GM13976 (cell line): ENCODE measurements at regions of chr19 and their contacts with region 1.

Region 1: DNA sequence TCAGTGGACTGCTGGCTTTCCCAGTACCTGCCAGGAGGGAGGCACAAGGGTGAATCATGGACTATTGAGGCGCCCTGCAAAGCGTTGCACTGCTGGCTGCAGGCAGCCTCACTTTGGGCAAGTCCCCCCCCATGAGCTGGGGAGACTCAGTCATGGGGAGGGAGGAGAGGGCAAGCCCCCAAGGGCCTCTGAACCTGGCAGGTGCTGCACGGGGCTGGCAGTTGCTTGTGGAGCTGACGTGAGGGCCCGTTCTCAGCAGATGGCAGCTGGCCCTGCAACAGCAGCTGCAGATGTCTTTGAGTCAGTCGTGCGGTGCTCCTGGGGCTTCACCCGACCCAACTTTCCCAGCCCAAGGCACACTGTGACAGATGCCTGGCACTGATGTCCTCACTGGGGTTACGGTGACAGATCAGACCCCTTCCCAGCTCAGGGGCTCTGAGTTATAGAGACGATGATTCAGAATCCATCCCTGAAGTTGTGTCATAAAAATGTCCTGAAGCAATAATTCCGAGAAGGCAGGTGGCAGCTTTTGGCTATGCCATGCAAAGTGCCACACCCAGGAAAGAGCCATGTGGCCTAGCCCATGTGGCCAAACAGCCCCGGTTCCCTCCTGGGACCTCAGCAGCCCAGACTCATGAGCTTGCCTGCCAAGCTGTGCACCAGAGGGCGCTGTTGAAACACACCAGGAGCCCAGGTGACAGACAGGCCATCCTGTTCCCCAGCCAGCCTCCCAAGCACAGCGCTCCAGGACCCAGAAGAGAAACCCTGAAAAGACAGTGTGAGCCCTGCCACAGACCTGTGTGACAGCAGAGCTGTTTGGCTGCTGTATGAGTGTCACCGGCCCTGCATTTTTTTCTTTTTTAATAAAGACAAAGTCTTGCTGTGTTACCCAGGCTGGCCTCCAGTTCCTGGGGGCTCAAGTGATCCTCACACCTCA is 53.6 kb upstream of the LDLR start:
- DNase-seq: peak; percentile 93
- CTCF ChIP-seq: peak; percentile 92

Region 2: DNA sequence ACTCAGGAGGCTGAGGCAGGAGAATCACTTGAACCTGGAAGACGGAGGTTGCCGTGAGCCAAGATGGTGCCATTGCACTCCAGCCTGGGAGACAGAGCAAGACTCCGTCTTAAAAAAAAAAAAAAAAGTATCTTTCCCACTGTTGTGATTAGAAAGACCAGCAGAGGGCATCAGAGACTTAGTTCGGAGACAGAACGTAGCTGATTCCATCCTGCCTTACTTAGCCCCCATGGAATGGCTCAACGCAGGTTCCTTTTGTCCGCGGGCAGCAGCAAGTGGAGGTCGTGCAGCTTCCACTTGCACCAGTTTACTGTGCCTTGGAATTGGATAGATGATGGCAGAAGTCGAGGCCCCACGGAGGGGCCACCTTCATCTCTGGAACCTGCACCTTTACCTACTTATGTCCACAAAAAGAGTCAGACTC is 99.0 kb before region 1 on chr19:
- in situ Hi-C with region 1: no loop called
- DNase-seq: peak; percentile 68
- CTCF ChIP-seq: peak; percentile 42

Region 3: GRCh38 chr19:11125994-11126685 is 90.4 kb after region 1 on chr19:
- in situ Hi-C with region 1: loop called (anchors 10 kb)
- DNase-seq: peak; percentile 80
- CTCF ChIP-seq: peak; percentile 83